ENCODE measurements at regions of chr13 and their contacts with region 1.

Region 1: DNA sequence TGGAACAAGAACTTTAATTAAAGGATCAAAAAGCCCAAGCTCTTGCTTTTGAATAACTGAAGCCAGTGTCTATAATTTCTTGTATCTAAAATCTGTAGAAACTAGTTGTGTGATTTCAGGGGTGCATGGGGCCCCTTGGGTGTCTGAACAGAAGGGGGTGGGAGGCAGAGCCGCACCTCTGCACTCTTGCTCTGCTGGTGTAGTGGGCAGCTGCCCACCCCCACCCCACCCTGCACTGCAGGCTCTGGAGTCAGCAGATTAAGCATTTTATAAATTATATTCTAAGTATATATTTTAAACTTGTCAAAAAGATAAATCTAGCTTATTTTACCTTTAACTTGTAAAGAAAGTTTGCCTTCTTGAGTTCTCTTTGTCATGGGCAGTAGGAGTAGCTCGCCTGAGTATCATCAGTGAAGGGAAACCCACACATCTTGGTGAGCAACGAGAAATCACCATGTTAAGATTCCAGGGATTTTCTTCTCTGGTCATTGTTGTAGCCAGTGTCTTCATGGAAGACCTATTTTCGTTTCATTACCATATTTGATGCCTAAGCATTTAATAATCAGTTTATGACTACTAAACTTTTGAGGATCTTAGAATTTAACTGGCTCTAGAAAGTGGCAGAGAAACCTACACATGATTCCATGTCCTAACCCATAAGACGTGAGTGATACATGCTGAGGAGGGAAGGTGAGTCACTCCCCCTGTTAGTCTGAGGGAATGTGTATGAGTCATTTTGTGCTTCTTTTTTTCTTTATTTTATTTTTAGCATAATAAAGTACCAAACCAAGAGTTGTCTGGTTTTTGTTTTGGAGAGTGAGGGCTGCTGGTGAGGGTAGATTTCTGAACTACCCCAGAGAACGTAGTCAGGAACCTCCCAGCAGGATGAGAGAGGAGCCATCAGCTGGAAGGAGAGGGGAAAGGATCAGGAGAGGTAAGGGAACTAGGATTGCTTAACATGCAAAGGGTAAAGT is 7.7 kb downstream of the UBE2L5 start:
- DNase-seq: peak; percentile 59
- ATAC-seq: peak; percentile 82
- H3K4me3 ChIP-seq: peak overlapping the region; percentile 29
- H3K27ac ChIP-seq: peak overlapping the region; percentile 50
- H3K4me1 ChIP-seq: peaks cover 28% of the 10 kb centered on the region
- H3K27me3 ChIP-seq: no peaks in the 10 kb centered on the region
- CTCF ChIP-seq: no peak
- EP300 ChIP-seq: peak; percentile 54 to 69; a peak in 2 of 4 replicates
- POLR2A ChIP-seq: no peak
- RAD21 ChIP-seq: 0 out of 2 replicates have a peak, but pooled peaks have one; percentile 1

Region 2: DNA sequence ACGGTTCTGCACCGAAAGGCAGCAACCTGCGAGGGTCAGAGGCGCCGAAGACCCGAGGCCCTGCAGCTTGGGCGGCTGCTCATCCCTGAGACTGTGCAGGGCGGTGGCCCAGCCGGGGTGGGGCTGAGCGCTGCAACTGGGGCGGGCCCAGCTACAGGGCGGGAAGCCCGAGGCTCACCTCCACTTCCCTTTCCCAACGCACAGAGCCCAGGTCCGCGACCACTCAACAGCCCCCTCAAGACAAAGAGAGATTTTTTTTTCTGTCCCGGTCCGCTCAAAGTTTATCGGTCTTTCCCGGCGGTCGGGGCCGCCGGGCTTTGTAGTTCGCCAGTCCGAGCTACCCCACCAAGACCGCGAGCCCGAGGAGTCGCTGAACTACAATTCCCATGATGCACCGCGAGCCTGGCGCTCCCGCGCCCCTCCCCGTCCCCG is 123.2 kb before region 1 on chr13:
- CTCF ChIA-PET with region 1: no interaction called
- POLR2A ChIA-PET with region 1: no interaction called
- RAD21 ChIA-PET with region 1: interaction called, 3 read pairs
- SMC1A ChIA-PET with region 1: no interaction called
- in situ Hi-C with region 1: no loop called
- intact Hi-C with region 1: loop called (anchors 5 kb)
- DNase-seq: peak; percentile 66
- ATAC-seq: peak; percentile 89
- H3K4me3 ChIP-seq: peak overlapping the region; percentile 67
- H3K27ac ChIP-seq: peak overlapping the region; percentile 74
- H3K4me1 ChIP-seq: peaks cover 18% of the 10 kb centered on the region
- H3K27me3 ChIP-seq: no peaks in the 10 kb centered on the region
- CTCF ChIP-seq: no peak
- EP300 ChIP-seq: no peak
- POLR2A ChIP-seq: peak; percentile 71
- RAD21 ChIP-seq: no peak

Region 3: GRCh38 chr13:30395192-30396084 is 34.6 kb before region 1 on chr13:
- CTCF ChIA-PET with region 1: no interaction called
- POLR2A ChIA-PET with region 1: interaction called, 15 read pairs
- RAD21 ChIA-PET with region 1: interaction called, 8 read pairs
- SMC1A ChIA-PET with region 1: interaction called, 5 read pairs
- in situ Hi-C with region 1: no loop called
- intact Hi-C with region 1: no loop called
- DNase-seq: peak; percentile 60
- ATAC-seq: peak; percentile 85
- H3K4me3 ChIP-seq: peak overlapping the region; percentile 82
- H3K27ac ChIP-seq: peak overlapping the region; percentile 89
- H3K4me1 ChIP-seq: peaks cover 7% of the 10 kb centered on the region
- H3K27me3 ChIP-seq: no peaks in the 10 kb centered on the region
- CTCF ChIP-seq: no peak
- EP300 ChIP-seq: peak in 1 of 2 experiments; percentile 56; a peak in 1 of 4 replicates
- POLR2A ChIP-seq: peak; percentile 34
- RAD21 ChIP-seq: no peak

Region 4: DNA sequence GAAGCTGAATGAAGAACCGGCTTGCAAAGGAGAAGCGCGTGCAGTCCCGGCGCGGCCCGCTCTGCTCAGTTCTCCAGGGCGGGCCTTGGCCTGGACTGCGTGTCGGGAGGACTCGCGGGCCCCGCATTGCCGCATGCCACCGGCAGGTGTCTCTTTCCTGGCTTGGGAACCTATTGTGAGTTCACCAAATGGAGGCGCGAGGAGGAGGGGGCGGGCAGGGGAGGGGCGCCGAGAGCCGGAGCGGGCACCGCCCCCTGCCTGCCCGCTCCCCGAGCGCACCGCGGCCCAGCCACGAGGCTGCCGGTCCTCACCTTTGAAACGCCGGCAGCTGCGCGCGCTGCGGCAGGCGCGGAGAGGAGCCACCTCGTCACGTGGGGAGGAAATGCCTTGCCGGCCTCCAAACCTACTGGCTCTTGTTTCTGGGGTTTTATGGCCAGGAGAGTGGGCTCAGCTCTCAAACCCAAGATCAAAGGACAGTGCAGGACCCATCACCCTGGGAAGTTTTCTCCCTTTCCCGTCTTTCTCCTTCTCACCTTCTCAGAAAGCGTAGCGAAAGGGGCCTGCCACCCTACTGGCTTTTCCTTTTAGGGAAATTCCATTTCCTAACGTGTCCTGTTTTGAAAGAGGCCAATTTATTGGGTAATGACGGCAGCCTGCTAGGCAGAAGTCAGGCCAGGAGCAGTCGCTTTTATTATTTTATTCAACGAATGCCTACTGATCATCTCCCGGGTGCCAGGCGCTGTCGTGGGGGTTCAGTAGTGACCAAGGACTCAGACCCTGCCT is 21.5 kb before region 1 on chr13:
- CTCF ChIA-PET with region 1: no interaction called
- POLR2A ChIA-PET with region 1: no interaction called
- RAD21 ChIA-PET with region 1: interaction called, 3 read pairs
- SMC1A ChIA-PET with region 1: interaction called, 22 read pairs
- in situ Hi-C with region 1: no loop called
- intact Hi-C with region 1: no loop called
- DNase-seq: no peak
- ATAC-seq: peak; percentile 97
- H3K4me3 ChIP-seq: no peak overlapping the region; the same call in 1 of the 2 replicates
- H3K27ac ChIP-seq: no peak overlapping the region
- H3K4me1 ChIP-seq: peaks cover 6% of the 10 kb centered on the region
- H3K27me3 ChIP-seq: no peaks in the 10 kb centered on the region
- CTCF ChIP-seq: peak; percentile 56 to 86 (median 74)
- EP300 ChIP-seq: 0 out of 4 replicates have a peak, but pooled peaks of 1 of the 2 experiments have one; percentile 22
- POLR2A ChIP-seq: peak; percentile 62
- RAD21 ChIP-seq: peak; percentile 72

Region 5: DNA sequence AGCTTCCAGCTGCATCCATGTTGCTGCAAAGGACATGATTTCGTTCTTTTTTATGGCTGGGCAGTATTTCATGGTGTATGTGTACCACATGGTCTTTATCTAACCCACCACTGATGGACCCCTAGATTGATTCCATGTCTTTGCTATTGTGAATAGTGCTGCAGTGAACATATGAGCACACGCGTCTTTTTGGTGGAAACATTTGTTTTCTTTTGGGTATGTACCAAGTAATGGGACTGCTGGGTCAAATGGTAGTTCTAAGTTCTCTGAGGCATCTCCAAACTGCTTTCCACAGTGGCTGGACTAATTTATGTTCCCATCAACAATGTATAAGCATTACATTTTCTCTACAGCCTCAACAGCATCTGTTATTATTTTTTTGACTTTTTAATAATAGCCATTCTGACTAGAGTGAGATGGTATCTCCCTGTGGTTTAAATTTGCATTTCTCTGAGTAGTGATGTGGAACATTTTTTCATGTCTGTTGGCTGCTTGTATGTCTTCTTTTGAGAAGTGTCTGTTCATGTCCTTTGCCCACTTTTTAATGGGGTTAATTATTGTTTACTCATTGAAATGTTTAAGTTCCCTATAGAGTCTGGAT is 14.5 kb before region 1 on chr13:
- CTCF ChIA-PET with region 1: interaction called, 3 read pairs
- POLR2A ChIA-PET with region 1: interaction called, 4 read pairs
- RAD21 ChIA-PET with region 1: interaction called, 10 read pairs
- SMC1A ChIA-PET with region 1: interaction called, 31 read pairs
- in situ Hi-C with region 1: no loop called
- intact Hi-C with region 1: no loop called
- DNase-seq: no peak
- ATAC-seq: peak; percentile 91
- H3K4me3 ChIP-seq: no peak overlapping the region; the same call in 1 of the 2 replicates
- H3K27ac ChIP-seq: no peak overlapping the region
- H3K4me1 ChIP-seq: peaks cover 15% of the 10 kb centered on the region; the same call in 1 of the 2 replicates
- H3K27me3 ChIP-seq: no peaks in the 10 kb centered on the region
- CTCF ChIP-seq: no peak
- EP300 ChIP-seq: no peak
- POLR2A ChIP-seq: no peak
- RAD21 ChIP-seq: no peak